Endothelial cell of umbilical vein (primary cell): ENCODE measurements at regions of chr2 and their contacts with region 1.

Region 1: DNA sequence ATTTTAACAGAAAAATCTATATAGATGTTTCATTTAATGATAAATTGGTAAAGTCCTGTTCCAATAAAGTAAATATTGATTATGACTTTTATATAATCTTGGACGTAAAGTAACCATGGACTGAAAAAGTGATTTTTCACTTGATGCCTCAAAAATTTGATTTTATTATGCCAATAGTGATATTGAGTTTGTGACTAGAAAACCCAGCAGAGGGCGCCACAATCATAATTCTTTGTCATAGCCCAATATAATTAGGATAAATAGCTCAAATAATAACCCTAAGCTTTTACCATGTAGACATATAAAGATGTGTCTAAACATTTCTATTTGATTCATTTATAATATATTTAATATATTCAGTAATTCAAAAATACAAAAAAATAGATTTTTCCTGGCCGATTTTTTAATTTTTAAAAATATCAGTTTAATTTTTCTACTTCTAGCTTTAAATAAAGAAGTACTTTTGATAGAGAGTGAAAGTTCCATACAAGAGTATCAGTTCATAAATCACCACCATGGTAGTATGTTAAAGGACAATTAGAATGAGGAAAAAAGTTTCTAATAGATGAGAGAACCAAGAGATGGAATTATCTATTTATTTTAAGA is 30.7 kb downstream of the CAMKMT start:
- DNase-seq: peak; percentile 46
- H3K4me3 ChIP-seq: no peak overlapping the region
- H3K27ac ChIP-seq: no peak overlapping the region
- H3K4me1 ChIP-seq: no peaks in the 10 kb centered on the region
- H3K27me3 ChIP-seq: no peaks in the 10 kb centered on the region
- CTCF ChIP-seq: peak; percentile 36 to 38
- POLR2A ChIP-seq: no peak

Region 2: DNA sequence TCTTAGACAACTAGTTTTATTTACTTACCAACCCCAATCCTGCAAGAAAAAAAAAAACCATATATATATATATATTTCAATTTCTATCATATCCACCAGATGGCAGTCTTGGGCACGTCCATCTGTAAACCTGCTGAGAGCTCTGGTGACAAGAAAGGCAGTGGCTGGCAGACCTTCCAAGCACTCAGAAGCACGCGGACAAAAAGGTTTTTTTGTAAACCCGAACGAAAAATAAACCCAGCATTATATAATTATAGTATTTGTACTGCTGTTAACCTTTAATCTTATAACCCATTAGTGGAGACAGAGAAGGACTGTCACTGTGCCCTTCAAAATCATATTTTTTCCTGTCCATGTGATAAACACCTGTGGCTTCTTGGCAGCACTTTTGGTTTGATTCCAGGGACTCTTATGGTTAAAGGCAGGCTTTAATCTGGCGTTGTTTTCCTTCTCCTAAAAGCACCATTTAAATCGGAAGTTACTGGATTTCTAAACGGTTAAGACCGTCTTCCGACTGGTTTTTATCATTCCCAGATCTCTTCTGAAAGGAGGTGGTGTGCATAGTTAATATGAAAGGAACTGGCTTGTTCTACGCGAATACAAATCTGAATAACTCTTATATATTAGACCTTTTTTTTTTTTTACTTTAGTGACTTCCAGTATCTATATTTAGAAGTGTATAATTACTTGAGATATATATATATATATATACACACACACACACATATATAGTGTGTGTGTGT is 148.1 kb before region 1 on chr2:
- CTCF ChIA-PET with region 1: interaction called, 5 read pairs
- POLR2A ChIA-PET with region 1: no interaction called
- dilution Hi-C with region 1: no loop called
- intact Hi-C with region 1: loop called (anchors 1 kb)
- DNase-seq: peak; percentile 86
- H3K4me3 ChIP-seq: peak overlapping the region; percentile 3 to 59 (median 25)
- H3K27ac ChIP-seq: no peak overlapping the region
- H3K4me1 ChIP-seq: no peaks in the 10 kb centered on the region
- H3K27me3 ChIP-seq: peaks cover 2 to 7% of the 10 kb centered on the region in 2 experiments
- CTCF ChIP-seq: peak; percentile 36 to 46
- POLR2A ChIP-seq: no peak

Region 3: GRCh38 chr2:44377486-44377885 is 15.0 kb before region 1 on chr2:
- CTCF ChIA-PET with region 1: interaction called, 10 read pairs
- POLR2A ChIA-PET with region 1: no interaction called
- dilution Hi-C with region 1: no loop called
- intact Hi-C with region 1: no loop called
- DNase-seq: no peak
- H3K4me3 ChIP-seq: no peak overlapping the region
- H3K27ac ChIP-seq: no peak overlapping the region
- H3K4me1 ChIP-seq: no peaks in the 10 kb centered on the region
- H3K27me3 ChIP-seq: no peaks in the 10 kb centered on the region
- CTCF ChIP-seq: no peak
- POLR2A ChIP-seq: no peak

Region 4: GRCh38 chr2:44470151-44470550 is 77.7 kb after region 1 on chr2:
- CTCF ChIA-PET with region 1: interaction called, 172 read pairs
- POLR2A ChIA-PET with region 1: no interaction called
- dilution Hi-C with region 1: no loop called
- intact Hi-C with region 1: no loop called
- DNase-seq: no peak
- H3K4me3 ChIP-seq: no peak overlapping the region
- H3K27ac ChIP-seq: no peak overlapping the region
- H3K4me1 ChIP-seq: no peaks in the 10 kb centered on the region
- H3K27me3 ChIP-seq: no peaks in the 10 kb centered on the region
- CTCF ChIP-seq: no peak
- POLR2A ChIP-seq: no peak

Region 5: GRCh38 chr2:44715671-44716081 is 323.2 kb after region 1 on chr2:
- CTCF ChIA-PET with region 1: interaction called, 23 read pairs
- POLR2A ChIA-PET with region 1: no interaction called
- dilution Hi-C with region 1: no loop called
- intact Hi-C with region 1: no loop called
- DNase-seq: peak; percentile 26
- H3K4me3 ChIP-seq: no peak overlapping the region
- H3K27ac ChIP-seq: no peak overlapping the region
- H3K4me1 ChIP-seq: no peaks in the 10 kb centered on the region
- H3K27me3 ChIP-seq: no peaks in the 10 kb centered on the region
- CTCF ChIP-seq: peak; percentile 16 to 43
- POLR2A ChIP-seq: no peak

Region 6: GRCh38 chr2:44972771-44973535 is 580.5 kb after region 1 on chr2:
- CTCF ChIA-PET with region 1: interaction called, 13 read pairs
- POLR2A ChIA-PET with region 1: no interaction called
- dilution Hi-C with region 1: no loop called
- intact Hi-C with region 1: no loop called
- DNase-seq: no peak
- H3K4me3 ChIP-seq: peak overlapping the region in 1 of 3 experiments; percentile 35
- H3K27ac ChIP-seq: no peak overlapping the region
- H3K4me1 ChIP-seq: no peaks in the 10 kb centered on the region
- H3K27me3 ChIP-seq: peaks cover 2 to 11% of the 10 kb centered on the region in 2 experiments
- CTCF ChIP-seq: no peak
- POLR2A ChIP-seq: no peak